Activated naive CD4-positive, alpha-beta T cell treated with anti-CD3 and anti-CD28 coated beads for 36 hours (primary cell): ENCODE measurements at regions of chr1 and their contacts with region 1.

Region 1: DNA sequence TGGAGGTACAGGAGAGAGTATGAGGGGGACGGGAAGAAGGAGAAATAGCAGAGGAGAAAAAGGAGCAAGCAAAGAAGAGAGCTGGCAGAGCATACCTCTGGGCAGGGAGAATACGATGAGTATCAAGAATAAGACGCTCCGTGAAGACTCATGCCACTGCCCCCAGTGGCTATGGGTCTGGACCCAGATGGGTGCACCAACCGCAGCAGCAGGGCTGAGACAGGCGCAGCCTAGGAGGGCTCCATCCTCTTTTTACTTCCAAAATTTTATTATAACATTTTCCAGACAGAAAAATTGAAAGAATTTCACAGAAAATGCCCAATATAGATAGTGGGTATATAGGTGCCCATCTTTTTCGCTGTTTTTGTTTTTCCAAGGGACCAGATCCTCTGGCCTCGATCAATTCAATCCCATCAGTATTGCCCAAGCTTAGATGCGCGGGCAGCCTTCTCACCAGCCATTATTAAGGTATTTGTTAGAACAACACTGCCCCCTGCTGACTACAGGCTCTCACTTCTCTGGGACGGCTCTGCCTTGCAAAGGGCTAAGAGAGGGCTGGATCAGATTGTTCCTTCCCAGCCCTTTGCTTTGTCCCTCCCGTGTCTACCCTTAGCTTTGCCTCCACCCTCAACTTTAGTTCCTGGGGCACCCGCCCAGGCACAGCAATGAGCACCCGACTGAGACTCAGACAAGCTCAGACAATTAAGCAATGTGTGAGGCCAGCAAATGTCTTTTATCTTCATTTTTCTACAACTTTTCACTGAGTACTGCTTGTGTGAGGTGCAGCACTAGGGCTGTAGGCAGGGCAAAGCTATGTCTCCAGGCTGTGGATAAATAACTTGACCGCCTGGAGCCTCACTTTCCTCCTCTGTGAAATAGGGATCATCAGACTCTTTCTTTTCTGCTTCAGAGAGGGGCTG is 17.5 kb upstream of the CAMK1G start:
- DNase-seq: peak; percentile 92
- H3K4me3 Mint-ChIP-seq: no peak overlapping the region
- H3K27ac Mint-ChIP-seq: no peak overlapping the region
- H3K4me1 Mint-ChIP-seq: peaks cover 20% of the 10 kb centered on the region
- H3K27me3 Mint-ChIP-seq: peaks cover 13% of the 10 kb centered on the region

Region 2: DNA sequence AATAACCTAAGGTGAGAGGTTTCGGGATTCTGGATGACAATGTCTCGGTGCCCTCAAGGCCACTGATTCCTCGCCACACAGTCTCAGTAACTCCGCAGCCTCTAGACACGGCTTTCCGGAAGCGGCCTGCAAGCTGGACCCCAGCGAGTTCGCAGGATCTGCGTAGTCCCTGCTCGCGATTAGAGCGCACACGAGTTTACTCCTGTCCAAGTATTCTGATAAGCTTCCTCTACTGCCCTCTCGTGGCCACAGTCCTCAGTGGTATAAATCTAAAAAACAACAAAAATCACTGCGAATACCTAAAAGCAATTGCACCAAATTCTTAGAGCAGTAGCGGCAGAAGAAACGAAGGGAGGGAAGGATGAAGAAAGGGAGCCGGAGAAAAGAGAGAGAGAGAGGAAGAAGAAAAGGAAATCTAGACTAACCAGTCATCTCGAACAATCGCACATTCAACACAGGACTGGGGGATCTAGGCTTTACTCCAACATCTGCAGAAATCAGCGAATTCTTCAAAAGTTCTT is 1320.8 kb before region 1 on chr1:
- CTCF ChIA-PET with region 1: interaction called, 3 read pairs
- intact Hi-C with region 1: loop called (anchors 10 kb)
- DNase-seq: peak; percentile 92
- H3K4me3 Mint-ChIP-seq: peak overlapping the region; percentile 70
- H3K27ac Mint-ChIP-seq: no peak overlapping the region
- H3K4me1 Mint-ChIP-seq: peaks cover 10% of the 10 kb centered on the region
- H3K27me3 Mint-ChIP-seq: peaks cover 25% of the 10 kb centered on the region

Region 3: DNA sequence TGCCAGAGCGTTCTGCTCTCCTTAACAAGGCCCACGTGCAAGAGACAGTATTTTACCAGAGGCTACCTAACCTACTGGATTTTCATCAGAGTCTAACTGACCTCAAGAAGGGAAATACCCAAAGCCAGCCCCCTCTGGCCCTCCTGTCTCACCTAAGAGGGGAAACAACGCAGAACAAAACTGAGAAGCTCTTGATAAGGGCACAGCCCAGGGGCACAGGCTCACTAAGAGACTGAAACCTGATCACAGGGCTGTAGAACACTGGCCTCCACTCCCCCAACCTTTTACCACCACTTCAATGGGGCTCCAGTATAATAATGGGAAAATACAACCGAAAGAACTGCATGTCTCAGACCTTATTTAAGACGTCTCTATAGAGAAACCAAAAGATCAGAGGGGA is 432.0 kb before region 1 on chr1:
- CTCF ChIA-PET with region 1: no interaction called
- intact Hi-C with region 1: no loop called
- DNase-seq: no peak
- H3K4me3 Mint-ChIP-seq: no peak overlapping the region
- H3K27ac Mint-ChIP-seq: no peak overlapping the region
- H3K4me1 Mint-ChIP-seq: no peaks in the 10 kb centered on the region
- H3K27me3 Mint-ChIP-seq: no peaks in the 10 kb centered on the region

Region 4: DNA sequence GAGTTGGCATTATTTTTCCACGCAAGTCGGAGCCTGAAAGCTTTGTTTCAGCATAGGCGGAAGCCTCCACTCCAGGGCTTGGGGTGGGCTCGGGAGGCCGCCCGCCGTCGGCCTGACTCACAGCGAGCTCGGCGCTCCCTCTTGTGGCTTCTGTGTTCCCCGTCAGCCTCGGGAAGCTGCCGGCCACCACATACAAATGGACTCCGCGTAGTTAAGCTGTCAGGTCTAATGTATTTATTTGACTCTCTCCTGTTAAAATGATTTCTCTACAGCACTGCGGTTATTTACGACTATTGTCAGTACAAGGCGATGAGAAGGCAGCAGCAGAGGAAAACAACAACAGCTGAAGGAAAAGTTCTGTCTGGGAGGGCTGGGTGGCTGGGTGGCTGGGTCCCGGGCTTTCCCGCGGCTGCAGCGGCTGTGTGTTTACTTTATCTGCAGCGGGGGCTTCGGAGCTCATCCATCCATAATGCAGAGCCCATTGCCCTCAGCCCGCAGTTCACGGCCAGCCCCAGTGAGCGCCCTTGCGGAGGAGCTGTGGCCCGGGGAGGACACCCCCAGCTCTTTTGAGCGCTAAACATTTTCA is 358.2 kb before region 1 on chr1:
- CTCF ChIA-PET with region 1: interaction called, 14 read pairs
- intact Hi-C with region 1: loop called (anchors 1 kb)
- DNase-seq: peak; percentile 45
- H3K4me3 Mint-ChIP-seq: no peak overlapping the region
- H3K27ac Mint-ChIP-seq: no peak overlapping the region
- H3K4me1 Mint-ChIP-seq: peaks cover 2% of the 10 kb centered on the region
- H3K27me3 Mint-ChIP-seq: peaks cover 32% of the 10 kb centered on the region

Region 5: DNA sequence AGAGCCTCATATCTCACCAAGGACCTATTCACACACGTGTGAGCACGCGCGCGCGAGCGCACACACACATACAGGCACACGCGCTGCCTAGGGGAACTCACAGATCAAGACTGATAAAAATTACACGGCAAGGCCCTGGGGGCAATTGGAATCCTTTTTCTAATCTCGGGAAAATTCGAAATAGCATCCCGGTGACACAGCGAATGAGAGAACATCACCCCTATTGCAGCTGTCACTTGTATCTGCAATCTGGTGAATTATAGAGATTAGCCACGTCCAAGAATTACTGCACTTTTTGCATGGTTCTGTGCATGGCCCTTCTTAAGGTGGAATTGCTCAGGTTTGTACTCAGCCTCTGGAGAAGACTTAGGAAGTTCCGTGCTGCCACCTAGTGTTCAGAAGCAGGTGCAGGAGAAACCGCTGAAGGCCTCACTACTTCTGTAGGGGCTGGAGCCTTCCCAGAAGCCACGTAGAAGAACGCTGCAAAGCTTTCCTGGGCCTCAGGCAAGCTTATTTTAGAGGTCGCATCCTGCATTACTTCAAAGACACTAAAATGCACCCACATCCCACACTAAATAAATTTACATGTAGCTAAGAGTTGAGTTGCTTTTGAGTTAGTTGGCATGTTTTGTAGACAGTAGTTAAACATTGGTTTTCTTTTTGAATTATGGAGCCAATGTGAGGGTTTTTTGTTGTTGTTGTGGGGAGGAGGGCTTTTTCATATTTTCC is 211.7 kb before region 1 on chr1:
- CTCF ChIA-PET with region 1: interaction called, 5 read pairs
- intact Hi-C with region 1: loop called (anchors 2 kb)
- DNase-seq: peak; percentile 77
- H3K4me3 Mint-ChIP-seq: no peak overlapping the region
- H3K27ac Mint-ChIP-seq: no peak overlapping the region
- H3K4me1 Mint-ChIP-seq: no peaks in the 10 kb centered on the region
- H3K27me3 Mint-ChIP-seq: peaks cover 3% of the 10 kb centered on the region

Region 6: DNA sequence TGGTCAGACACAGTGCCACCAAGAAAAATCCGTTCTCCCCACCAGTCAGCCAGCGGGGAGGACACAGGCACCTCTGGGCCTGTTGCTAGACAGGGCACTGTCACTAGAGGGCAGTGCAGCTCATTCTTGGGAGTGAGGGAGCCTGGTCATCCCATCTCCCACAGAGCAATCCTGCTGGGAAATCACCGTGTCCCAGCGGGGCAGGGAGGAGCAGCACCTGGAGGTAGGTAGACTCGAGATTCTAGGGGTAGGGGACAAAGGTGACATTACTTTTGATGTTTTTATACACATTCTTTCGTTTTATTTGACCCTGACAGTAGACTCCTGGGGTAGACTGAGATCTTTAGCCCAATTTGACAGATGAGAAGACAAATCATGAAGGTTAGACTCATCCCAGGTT is 10.8 kb after region 1 on chr1:
- CTCF ChIA-PET with region 1: interaction called, 25 read pairs
- intact Hi-C with region 1: no loop called
- DNase-seq: peak; percentile 83
- H3K4me3 Mint-ChIP-seq: no peak overlapping the region
- H3K27ac Mint-ChIP-seq: no peak overlapping the region
- H3K4me1 Mint-ChIP-seq: no peaks in the 10 kb centered on the region
- H3K27me3 Mint-ChIP-seq: no peaks in the 10 kb centered on the region

Region 7: GRCh38 chr1:209627732-209628196 is 61.7 kb after region 1 on chr1:
- CTCF ChIA-PET with region 1: interaction called, 19 read pairs
- intact Hi-C with region 1: loop called (anchors 1 kb)
- DNase-seq: peak; percentile 89
- H3K4me3 Mint-ChIP-seq: no peak overlapping the region
- H3K27ac Mint-ChIP-seq: no peak overlapping the region
- H3K4me1 Mint-ChIP-seq: peaks cover 15% of the 10 kb centered on the region
- H3K27me3 Mint-ChIP-seq: no peaks in the 10 kb centered on the region

Region 8: DNA sequence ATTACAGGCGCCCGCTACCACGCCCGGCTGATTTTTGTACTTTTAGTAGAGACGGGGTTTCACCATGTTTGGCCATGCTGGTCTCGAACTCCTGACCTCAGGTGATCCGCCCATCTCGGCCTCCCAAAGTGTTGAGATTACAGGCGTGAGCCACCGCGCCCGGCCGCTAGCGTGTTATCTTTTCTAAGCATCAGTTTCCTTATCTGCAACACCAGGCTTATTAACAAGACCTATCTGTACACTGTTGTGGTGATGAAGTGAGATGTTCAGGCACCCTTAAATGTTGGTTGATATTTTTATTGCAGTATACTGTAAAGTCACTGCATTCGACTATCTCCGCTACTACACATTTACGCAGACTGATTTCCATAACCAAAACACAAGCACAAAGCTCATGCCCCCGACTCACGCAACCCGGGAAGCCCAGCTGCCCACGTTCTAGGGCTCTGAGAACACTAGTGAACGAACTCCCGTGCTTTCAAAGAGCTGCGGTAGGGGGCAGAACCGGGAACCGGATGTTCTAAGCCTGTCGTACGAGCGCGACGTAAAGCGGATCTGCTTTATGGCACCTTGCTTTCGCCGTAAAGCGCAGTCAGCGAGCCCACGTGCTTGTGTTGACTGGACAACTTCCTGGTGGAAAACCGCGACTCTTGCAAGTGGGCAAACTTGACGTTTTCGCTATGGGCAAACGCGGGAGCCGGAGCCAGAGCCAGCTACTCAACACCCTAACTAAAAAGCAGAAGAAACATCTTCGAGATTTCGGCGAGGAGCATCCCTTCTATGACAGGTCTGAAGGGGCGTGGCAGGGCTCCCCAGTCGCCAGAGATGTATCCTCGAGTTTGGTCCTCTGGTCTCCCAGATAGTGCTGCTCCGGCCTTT is 261.6 kb after region 1 on chr1 and contains the start of gene UTP25:
- CTCF ChIA-PET with region 1: interaction called, 10 read pairs
- intact Hi-C with region 1: loop called (anchors 5 kb)
- DNase-seq: peak; percentile 97
- H3K4me3 Mint-ChIP-seq: peak within 1 kb of the TSS; percentile 79
- H3K27ac Mint-ChIP-seq: peak within 1 kb of the TSS; percentile 86
- H3K4me1 Mint-ChIP-seq: peaks cover 34% of the 10 kb centered on the region
- H3K27me3 Mint-ChIP-seq: peaks cover 4% of the 10 kb centered on the region
- total RNA-seq, gene UTP25: 4.1 to 4.6 TPM